ENCODE measurements at regions of chr14 and their contacts with region 1.

Region 1: DNA sequence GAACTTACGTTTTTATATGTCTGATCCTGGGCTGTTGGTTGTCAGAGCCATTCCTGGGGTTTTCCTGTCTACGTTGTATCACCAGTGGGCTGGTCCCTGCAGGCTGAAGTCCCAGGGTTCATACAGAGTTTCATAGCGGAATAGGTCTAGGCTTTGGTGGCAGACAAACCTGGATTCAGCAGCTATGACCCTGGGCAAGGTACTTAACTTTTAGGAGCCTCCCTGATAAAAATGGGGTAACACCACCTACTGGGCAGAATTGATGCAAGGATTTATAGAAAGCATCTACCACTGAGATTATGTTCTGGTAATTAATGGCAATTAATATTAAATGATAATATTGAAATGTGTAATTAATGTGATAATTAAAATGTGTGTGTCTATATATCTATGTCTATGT is 141.2 kb downstream of the SYNE2 start:
- DNase-seq: peak; percentile 17
- ATAC-seq: peak; percentile 81
- H3K4me3 ChIP-seq: no peak overlapping the region
- H3K27ac ChIP-seq: no peak overlapping the region
- H3K4me1 ChIP-seq: no peaks in the 10 kb centered on the region
- H3K27me3 ChIP-seq: no peaks in the 10 kb centered on the region
- CTCF ChIP-seq: peak; percentile 54

Region 2: GRCh38 chr14:64012720-64013119 is 18.7 kb after region 1 on chr14:
- CTCF ChIA-PET with region 1: interaction called, 12 read pairs
- POLR2A ChIA-PET with region 1: no interaction called
- intact Hi-C with region 1: no loop called
- DNase-seq: no peak
- ATAC-seq: no peak
- H3K4me3 ChIP-seq: no peak overlapping the region
- H3K27ac ChIP-seq: no peak overlapping the region
- H3K4me1 ChIP-seq: no peaks in the 10 kb centered on the region
- H3K27me3 ChIP-seq: no peaks in the 10 kb centered on the region
- CTCF ChIP-seq: no peak

Measured in PC-3 (cell line).